Sigmoid colon (tissue), 7 donors: ENCODE measurements at regions of chr10 and their contacts with region 1.

Region 1: DNA sequence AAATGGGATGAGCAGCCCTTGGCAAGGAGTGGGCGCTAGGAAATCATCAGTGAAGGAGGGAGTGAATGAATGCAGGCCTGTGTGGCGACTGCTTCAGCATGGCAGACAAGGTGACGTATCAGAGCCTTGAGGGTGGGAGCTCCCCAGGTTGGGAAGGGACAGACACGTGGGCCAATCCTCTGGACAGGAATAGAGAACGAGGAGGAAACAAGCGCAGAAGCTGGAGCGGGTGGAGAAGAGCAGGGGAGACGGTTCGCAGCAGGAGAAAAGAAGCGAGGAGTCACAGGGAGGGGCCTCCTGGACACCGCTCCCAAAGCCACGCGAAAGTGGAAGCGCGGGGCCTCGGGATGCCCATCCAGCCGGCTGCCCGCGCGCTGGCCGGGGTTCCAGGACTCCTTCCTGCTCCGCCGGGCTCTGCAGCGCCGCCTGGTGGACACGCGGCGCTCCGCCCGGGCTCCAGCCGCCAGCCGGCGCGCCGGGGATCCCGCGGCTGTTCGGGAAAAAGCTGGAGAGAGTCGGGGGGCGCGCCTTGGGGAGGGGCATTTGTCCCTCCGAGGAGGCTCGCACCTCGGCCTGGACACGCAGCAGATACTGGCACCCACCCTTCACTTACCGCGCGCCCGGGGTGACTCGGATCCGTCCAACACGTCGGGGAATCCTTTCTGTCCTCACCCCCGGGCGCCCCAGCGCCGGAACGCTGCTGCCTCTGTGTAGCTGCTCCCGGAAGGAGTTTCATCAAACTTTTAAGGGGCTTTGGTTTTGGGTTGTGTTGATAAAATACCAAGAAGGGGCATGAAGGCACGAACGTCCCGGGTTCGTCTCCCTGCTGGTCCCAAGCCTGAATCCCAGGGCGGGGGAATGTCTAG is 6.3 kb downstream of the ZNF503 start:
- DNase-seq: no peak
- H3K4me3 ChIP-seq: peak overlapping the region in 3 of 4 donors; percentile 76 to 94 (median 90)
- H3K27ac ChIP-seq: peak overlapping the region; percentile 93 to 99 (median 98)
- H3K4me1 ChIP-seq: peaks cover 0 to 33% (median 18%) of the 10 kb centered on the region in 4 donors
- H3K27me3 ChIP-seq: no peaks in the 10 kb centered on the region
- CTCF ChIP-seq: peak; percentile 49 to 90 (median 68)
- EP300 ChIP-seq: no peak
- POLR2A ChIP-seq: no peak

Region 2: DNA sequence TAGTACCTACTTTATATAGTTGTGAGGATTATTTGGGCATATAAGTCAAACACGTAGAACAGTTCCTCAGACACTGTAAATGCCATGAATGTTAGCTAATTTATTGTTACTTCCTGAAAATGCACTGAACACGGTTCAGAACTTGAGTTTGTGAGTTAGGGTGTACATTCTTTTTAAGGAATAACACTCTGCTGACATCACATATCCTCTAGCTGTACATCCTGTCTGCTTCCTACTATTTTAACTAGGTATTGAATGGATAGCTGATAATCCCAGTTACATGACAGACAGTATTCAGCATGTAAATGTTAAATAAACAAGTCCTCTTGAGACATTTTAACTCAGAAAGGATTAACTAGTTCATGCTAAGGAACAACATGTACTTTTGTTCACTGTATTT is 267.8 kb before region 1 on chr10:
- intact Hi-C with region 1: no loop called
- DNase-seq: no peak
- H3K4me3 ChIP-seq: no peak overlapping the region
- H3K27ac ChIP-seq: no peak overlapping the region
- H3K4me1 ChIP-seq: peaks cover 0 to 28% (median 20%) of the 10 kb centered on the region in 4 donors
- H3K27me3 ChIP-seq: no peaks in the 10 kb centered on the region
- CTCF ChIP-seq: no peak
- EP300 ChIP-seq: no peak
- POLR2A ChIP-seq: no peak

Region 3: DNA sequence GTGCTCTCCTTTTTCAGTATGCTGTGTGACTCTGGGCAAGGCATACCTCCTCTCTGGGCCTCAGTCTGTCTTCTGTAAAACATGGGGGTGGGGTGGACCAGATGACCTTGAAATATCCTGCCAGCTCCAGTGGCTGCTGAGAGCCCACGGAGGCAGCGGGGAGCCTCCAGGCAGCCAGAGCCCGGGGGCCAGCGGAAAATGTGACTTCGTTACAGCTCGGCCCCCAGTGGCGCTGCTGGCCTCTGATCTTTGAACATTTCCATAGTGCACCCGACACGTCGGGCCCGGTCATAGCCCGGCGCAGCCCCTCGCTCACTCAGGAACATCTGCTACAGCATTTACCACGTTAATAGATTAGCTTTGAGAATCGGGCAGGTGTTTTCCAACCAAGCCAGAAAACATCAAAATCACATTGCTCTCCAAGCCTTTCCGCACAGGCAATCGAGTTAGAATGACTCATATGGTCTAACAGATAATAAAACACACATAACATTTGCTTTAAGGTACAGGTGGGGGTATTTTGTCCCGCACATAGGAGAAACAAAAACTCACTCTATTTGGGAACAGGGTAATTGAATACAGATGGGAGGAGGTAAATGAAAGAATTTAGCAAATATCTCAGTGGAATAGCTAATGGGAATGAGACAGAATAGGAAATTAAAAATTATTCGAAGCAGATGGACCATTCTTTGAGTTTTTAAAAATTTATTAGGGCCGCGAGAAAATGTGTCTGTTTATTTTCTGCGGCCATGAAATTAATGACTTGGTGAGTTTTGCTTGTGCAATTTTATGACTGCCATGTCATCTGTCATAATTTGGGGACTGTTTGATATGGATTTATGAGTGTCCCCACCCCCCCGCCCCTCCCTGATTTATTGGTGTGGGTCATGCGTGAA is 133.2 kb before region 1 on chr10:
- intact Hi-C with region 1: no loop called
- DNase-seq: no peak
- H3K4me3 ChIP-seq: no peak overlapping the region
- H3K27ac ChIP-seq: no peak overlapping the region
- H3K4me1 ChIP-seq: no peaks in the 10 kb centered on the region
- H3K27me3 ChIP-seq: no peaks in the 10 kb centered on the region
- CTCF ChIP-seq: no peak
- EP300 ChIP-seq: no peak
- POLR2A ChIP-seq: no peak

Region 4: GRCh38 chr10:75294866-75295701 is 100.2 kb before region 1 on chr10:
- intact Hi-C with region 1: loop called (anchors 2 kb)
- DNase-seq: peak; percentile 93
- H3K4me3 ChIP-seq: peak overlapping the region; percentile 30 to 63 (median 61)
- H3K27ac ChIP-seq: peak overlapping the region; percentile 86 to 90 (median 88)
- H3K4me1 ChIP-seq: peaks cover 0 to 29% (median 25%) of the 10 kb centered on the region in 4 donors
- H3K27me3 ChIP-seq: no peaks in the 10 kb centered on the region
- CTCF ChIP-seq: peak in 2 of 4 experiments; percentile 26 to 27
- EP300 ChIP-seq: peak in 3 of 4 donors; percentile 46 to 62 (median 55)
- POLR2A ChIP-seq: no peak